Calu3 (cell line): ENCODE measurements at regions of chr13 and their contacts with region 1.

Region 1: GRCh38 chr13:38763439-38764381 is 76.8 kb downstream of the FREM2 start:
- DNase-seq: peak; percentile 28
- H3K4me3 Mint-ChIP-seq: no peak overlapping the region
- H3K27ac Mint-ChIP-seq: peak overlapping the region; percentile 71
- H3K4me1 Mint-ChIP-seq: peaks cover 8% of the 10 kb centered on the region
- H3K27me3 Mint-ChIP-seq: no peaks in the 10 kb centered on the region
- CTCF ChIP-seq: no peak

Region 2: GRCh38 chr13:38590796-38591507 is 172.8 kb before region 1 on chr13:
- CTCF ChIA-PET with region 1: no interaction called
- intact Hi-C with region 1: loop called (anchors 5 kb)
- DNase-seq: peak; percentile 15
- H3K4me3 Mint-ChIP-seq: no peak overlapping the region
- H3K27ac Mint-ChIP-seq: peak overlapping the region; percentile 14
- H3K4me1 Mint-ChIP-seq: peaks cover 8% of the 10 kb centered on the region
- H3K27me3 Mint-ChIP-seq: no peaks in the 10 kb centered on the region
- CTCF ChIP-seq: no peak

Region 3: GRCh38 chr13:38686577-38687245 is 77.0 kb before region 1 on chr13 and contains the start of gene FREM2:
- CTCF ChIA-PET with region 1: interaction called, 9 read pairs
- intact Hi-C with region 1: loop called (anchors 1 kb)
- DNase-seq: peak; percentile 81
- H3K4me3 Mint-ChIP-seq: peak within 1 kb of the TSS; percentile 79
- H3K27ac Mint-ChIP-seq: peak within 1 kb of the TSS; percentile 33
- H3K4me1 Mint-ChIP-seq: peaks cover 8% of the 10 kb centered on the region
- H3K27me3 Mint-ChIP-seq: no peaks in the 10 kb centered on the region
- CTCF ChIP-seq: no peak
- total RNA-seq, gene FREM2: 23.1 and 25.4 TPM in 2 replicates

Region 4: DNA sequence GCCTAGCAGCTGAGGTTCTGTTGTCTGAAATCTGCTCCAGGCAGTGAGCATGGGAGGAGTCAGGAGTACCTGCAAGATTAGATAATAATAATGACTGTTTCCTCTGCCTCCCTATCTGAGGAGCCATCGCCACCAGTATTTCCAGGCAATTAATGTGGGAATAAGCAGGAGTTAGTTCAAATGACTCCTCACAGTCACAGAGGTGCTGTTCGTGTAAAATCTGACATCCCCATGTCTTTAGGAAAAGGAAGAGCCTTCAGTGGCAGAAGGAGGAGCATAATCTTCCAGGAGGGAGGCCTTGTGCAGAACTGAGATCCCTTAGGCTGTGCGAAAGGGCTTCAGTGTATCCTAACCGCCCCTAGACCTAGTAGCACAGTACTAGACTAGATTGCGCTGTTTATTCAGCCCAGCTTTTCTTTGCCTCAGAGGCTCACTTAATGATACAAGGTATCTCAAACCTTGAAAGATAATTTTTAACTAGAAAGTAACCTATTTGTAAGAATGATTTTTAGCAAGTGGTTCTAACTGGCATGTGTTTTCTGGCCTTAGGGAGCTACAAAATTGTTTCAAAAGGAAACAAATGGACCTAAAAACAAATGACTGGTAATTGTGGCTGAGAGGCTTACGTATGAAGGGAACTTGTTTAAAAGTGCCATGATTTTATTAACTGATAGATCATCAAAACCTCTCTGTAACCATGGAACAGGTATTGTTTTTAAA is 27.8 kb before region 1 on chr13:
- CTCF ChIA-PET with region 1: no interaction called
- intact Hi-C with region 1: no loop called
- DNase-seq: no peak
- H3K4me3 Mint-ChIP-seq: no peak overlapping the region
- H3K27ac Mint-ChIP-seq: no peak overlapping the region
- H3K4me1 Mint-ChIP-seq: no peaks in the 10 kb centered on the region
- H3K27me3 Mint-ChIP-seq: no peaks in the 10 kb centered on the region
- CTCF ChIP-seq: no peak

Region 5: DNA sequence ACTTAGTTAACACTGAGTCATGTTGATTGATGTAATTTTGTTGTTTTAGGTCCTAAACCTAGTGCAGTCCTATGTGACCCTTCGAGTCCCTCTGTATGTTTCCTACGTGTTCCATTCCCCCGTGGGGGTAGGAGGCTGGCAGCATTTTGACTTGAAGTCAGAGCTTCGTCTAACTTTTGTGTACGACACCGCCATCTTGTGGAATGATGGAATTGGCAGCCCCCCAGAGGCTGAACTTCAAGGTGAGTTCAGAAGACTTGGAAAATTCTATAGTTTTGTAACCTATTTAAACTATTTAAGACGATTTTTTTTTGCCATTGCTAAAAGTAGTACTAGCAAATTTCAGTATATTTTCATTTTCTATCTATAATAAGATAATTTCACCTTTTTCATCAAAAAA is 109.0 kb after region 1 on chr13:
- CTCF ChIA-PET with region 1: no interaction called
- intact Hi-C with region 1: loop called (anchors 5 kb)
- DNase-seq: peak; percentile 57
- H3K4me3 Mint-ChIP-seq: no peak overlapping the region
- H3K27ac Mint-ChIP-seq: no peak overlapping the region
- H3K4me1 Mint-ChIP-seq: no peaks in the 10 kb centered on the region
- H3K27me3 Mint-ChIP-seq: no peaks in the 10 kb centered on the region
- CTCF ChIP-seq: no peak

Region 6: DNA sequence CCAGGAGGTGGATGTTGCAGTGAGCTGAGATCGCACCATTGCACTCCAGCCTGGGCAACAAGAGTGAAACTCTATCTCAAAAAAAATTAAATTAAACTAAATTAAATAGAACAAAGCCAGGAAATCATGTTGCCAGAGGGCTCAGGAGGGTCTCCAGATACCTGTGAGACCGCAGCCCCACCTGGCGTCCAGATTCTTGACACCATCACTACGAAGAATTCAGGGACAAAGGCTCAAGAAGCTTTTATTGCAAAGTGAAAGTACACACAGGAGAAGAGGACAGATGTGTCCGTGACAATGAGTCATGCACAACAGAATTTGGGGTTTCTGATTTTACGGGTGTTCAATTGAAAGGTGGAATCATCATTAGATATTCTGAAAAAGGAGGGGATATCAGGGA is 150.4 kb after region 1 on chr13:
- CTCF ChIA-PET with region 1: no interaction called
- intact Hi-C with region 1: loop called (anchors 5 kb)
- DNase-seq: no peak
- H3K4me3 Mint-ChIP-seq: no peak overlapping the region
- H3K27ac Mint-ChIP-seq: no peak overlapping the region
- H3K4me1 Mint-ChIP-seq: peaks cover 9% of the 10 kb centered on the region
- H3K27me3 Mint-ChIP-seq: no peaks in the 10 kb centered on the region
- CTCF ChIP-seq: no peak